ENCODE measurements at regions of chr10 and their contacts with region 1.

Region 1: DNA sequence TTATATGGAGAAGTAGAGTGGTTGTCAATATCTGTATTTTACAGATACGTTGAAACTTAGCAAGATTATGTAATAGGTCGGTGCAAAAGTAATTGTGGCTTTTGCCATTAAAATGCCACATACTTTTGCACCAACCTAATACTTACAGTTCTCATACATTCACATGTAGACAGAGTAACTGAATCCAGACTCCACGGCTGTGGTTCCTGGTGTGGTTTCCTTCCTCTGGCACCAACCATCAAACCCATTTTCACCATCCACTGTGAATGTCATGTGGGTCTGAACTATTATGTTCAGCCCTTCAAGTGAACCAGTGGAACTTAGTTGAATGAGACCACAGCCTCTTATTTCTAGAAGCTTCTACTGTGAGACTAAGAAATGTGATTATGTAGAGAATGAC is 31.5 kb upstream of the SLIT1 start:
- DNase-seq: peak; percentile 21
- H3K4me3 ChIP-seq: no peak overlapping the region
- H3K27ac ChIP-seq: peak overlapping the region; percentile 94
- H3K4me1 ChIP-seq: peaks cover 19% of the 10 kb centered on the region
- H3K27me3 ChIP-seq: no peaks in the 10 kb centered on the region
- CTCF ChIP-seq: no peak
- POLR2A ChIP-seq: no peak

Region 2: DNA sequence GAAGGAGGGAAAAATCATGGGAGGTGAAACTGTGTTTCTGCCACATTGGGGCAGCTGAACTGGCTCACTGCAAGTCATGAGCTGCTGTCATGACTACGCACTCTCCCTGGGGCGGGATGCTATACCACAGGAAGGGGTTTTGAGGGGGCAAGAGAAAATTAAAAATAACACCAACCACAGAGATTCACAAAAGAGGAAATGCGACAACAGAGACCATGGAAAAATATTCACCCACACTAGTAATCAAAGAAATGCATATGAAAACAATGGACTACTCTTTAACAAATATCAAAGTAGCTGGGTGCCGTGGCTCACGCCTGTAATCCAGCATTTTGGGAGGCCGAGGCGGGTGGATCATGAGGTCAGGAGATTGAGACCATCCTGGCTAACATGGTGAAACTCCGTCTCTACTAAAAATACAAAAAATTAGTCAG is 565.3 kb before region 1 on chr10:
- CTCF ChIA-PET with region 1: no interaction called
- POLR2A ChIA-PET with region 1: no interaction called
- dilution Hi-C with region 1: no loop called
- intact Hi-C with region 1: no loop called
- DNase-seq: no peak
- H3K4me3 ChIP-seq: no peak overlapping the region
- H3K27ac ChIP-seq: no peak overlapping the region
- H3K4me1 ChIP-seq: no peaks in the 10 kb centered on the region
- H3K27me3 ChIP-seq: no peaks in the 10 kb centered on the region
- CTCF ChIP-seq: no peak
- POLR2A ChIP-seq: no peak

Region 3: DNA sequence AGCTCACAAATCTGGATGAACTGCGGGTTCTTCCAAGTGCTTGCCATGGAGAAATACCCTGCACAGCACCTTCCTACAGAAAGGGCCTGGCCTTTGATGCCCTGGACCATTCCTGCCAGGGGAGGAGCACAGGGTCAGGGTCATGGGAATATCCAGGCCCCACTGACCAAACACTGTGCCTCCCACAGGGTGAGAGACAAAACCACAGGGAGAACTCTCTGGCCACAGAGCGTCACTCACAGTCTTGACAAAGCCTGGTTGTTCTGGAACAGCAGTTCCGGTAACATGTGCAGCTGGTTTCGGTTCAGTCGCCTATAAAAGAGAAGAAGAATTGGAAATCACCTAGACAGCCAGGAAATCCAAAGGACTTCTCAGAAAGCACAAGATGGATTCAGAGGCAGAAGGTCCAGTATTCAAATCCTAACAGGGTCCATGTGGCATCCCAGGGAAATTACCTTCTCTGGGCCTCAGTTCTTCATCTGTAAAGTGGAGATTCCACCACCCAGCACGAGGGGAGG is 59.7 kb before region 1 on chr10:
- CTCF ChIA-PET with region 1: no interaction called
- POLR2A ChIA-PET with region 1: no interaction called
- dilution Hi-C with region 1: no loop called
- intact Hi-C with region 1: no loop called
- DNase-seq: no peak
- H3K4me3 ChIP-seq: no peak overlapping the region
- H3K27ac ChIP-seq: no peak overlapping the region
- H3K4me1 ChIP-seq: no peaks in the 10 kb centered on the region
- H3K27me3 ChIP-seq: no peaks in the 10 kb centered on the region
- CTCF ChIP-seq: no peak
- POLR2A ChIP-seq: no peak

Region 4: DNA sequence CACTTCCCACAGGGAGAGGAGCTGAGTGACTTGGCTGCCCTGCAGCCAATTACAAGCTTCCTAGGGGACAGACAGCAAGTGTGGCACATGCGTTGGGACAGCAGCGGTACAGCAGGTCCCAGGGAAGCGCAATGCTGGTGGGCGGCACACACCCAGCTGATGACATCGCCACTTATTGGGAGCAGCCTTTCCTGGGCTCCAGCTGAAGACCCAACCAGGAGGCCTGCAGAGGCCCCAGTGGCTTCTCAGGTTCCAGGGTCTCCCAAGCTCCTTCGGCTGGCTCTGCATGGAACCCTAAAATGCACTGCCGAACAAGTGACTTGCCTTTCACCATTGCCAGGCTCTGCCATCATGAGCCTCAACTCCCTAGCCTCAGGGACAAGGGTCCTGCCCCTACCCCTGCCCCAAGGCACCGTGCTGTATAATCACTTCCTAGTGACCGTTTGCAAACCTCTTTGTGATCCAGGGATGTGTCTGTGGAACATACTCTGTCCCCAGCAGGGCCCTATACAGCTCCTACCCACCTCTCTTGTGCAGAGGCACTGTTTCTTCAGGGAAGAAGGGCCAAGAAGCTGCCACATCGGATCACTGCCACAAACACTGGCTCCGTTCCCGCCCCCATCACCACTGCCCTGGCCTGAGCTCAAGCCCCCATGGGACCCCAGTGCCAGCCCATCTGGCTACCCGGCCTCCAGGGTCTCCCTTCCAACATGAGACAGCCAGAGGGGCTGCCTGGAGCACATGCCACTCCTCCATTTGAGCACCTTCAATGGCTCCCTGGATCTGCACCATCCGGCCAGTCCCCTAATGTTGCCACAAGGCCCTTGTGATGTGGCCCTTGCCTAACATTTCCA is 12.2 kb before region 1 on chr10:
- CTCF ChIA-PET with region 1: interaction called, 110 read pairs
- POLR2A ChIA-PET with region 1: no interaction called
- dilution Hi-C with region 1: no loop called
- intact Hi-C with region 1: no loop called
- DNase-seq: no peak
- H3K4me3 ChIP-seq: no peak overlapping the region
- H3K27ac ChIP-seq: no peak overlapping the region
- H3K4me1 ChIP-seq: no peaks in the 10 kb centered on the region
- H3K27me3 ChIP-seq: no peaks in the 10 kb centered on the region
- CTCF ChIP-seq: no peak
- POLR2A ChIP-seq: no peak

Region 5: GRCh38 chr10:97234400-97234799 is 17.1 kb after region 1 on chr10:
- CTCF ChIA-PET with region 1: interaction called, 10 read pairs
- POLR2A ChIA-PET with region 1: interaction called, 4 read pairs
- dilution Hi-C with region 1: no loop called
- intact Hi-C with region 1: no loop called
- DNase-seq: peak; percentile 62
- H3K4me3 ChIP-seq: no peak overlapping the region
- H3K27ac ChIP-seq: no peak overlapping the region
- H3K4me1 ChIP-seq: no peaks in the 10 kb centered on the region
- H3K27me3 ChIP-seq: no peaks in the 10 kb centered on the region
- CTCF ChIP-seq: peak; percentile 43 to 50
- POLR2A ChIP-seq: no peak